Heart left ventricle (tissue), 16 donors: ENCODE measurements at regions of chr13 and their contacts with region 1.

Region 1: GRCh38 chr13:46492946-46493345 is 60.0 kb upstream of the LRCH1 start:
- DNase-seq: peak in 1 of 5 donors; percentile 12
- ATAC-seq: peak in 2 of 4 donors; percentile 45 to 59
- H3K4me3 ChIP-seq: no peak overlapping the region
- H3K27ac ChIP-seq: no peak overlapping the region
- H3K4me1 ChIP-seq: peaks cover 0 to 12% (median 0%) of the 10 kb centered on the region in 12 donors
- H3K27me3 ChIP-seq: peaks cover 0 to 1% (median 0%) of the 10 kb centered on the region in 9 donors
- CTCF ChIP-seq: peak; percentile 46 to 82 (median 67)
- POLR2A ChIP-seq: no peak

Region 2: DNA sequence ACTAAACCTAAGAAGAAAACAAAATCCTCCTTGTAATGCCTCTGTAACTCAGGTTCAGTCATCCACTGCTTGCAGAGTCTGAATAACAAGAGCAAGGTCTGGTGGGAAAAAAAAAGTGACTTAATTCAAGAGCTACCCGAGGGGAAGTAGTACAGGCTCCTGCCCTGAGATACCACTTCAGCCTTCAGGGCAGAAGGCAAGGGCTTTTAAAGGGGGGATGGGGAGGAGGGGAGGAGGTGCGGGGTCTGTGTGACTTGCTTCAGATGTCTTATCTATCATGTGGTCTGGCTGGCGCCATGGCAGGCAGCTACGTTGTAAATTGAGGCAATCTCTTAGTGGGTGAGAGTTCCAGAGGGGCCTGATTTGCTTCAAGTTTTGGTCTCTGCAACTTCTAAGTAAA is 214.5 kb before region 1 on chr13:
- intact Hi-C with region 1: no loop called
- DNase-seq: no peak
- ATAC-seq: no peak
- H3K4me3 ChIP-seq: no peak overlapping the region
- H3K27ac ChIP-seq: no peak overlapping the region
- H3K4me1 ChIP-seq: no peaks in the 10 kb centered on the region
- H3K27me3 ChIP-seq: peaks cover 0 to 6% (median 0%) of the 10 kb centered on the region in 9 donors
- CTCF ChIP-seq: no peak
- POLR2A ChIP-seq: no peak

Region 3: DNA sequence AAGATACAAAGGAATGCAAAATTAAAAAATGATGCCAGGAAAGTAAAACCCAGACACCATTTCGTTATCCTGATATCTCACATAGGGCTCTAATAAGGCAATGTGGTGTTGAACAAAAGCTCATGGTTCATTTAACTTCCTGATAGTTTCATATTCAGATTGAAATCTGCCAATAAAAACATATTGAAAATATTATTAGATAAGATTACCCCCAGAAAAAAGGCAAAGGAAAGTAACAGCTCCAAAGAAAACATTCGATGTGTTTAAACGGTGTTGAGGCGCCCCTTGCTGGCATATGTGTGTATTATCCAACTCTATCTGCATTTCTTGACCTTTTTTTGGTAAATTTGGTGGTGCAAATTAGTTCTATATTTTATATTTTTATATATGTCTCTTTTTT is 228.1 kb after region 1 on chr13:
- intact Hi-C with region 1: loop called (anchors 1 to 5 kb)
- DNase-seq: peak in 4 of 5 donors; percentile 32 to 45 (median 36)
- ATAC-seq: peak in 3 of 4 donors; percentile 39 to 68 (median 68)
- H3K4me3 ChIP-seq: no peak overlapping the region
- H3K27ac ChIP-seq: no peak overlapping the region
- H3K4me1 ChIP-seq: peaks cover 0 to 7% (median 2%) of the 10 kb centered on the region in 12 donors
- H3K27me3 ChIP-seq: no peaks in the 10 kb centered on the region
- CTCF ChIP-seq: peak; percentile 48 to 83 (median 71)
- POLR2A ChIP-seq: no peak